PC-3 (cell line): ENCODE measurements at regions of chr11 and their contacts with region 1.

Region 1: DNA sequence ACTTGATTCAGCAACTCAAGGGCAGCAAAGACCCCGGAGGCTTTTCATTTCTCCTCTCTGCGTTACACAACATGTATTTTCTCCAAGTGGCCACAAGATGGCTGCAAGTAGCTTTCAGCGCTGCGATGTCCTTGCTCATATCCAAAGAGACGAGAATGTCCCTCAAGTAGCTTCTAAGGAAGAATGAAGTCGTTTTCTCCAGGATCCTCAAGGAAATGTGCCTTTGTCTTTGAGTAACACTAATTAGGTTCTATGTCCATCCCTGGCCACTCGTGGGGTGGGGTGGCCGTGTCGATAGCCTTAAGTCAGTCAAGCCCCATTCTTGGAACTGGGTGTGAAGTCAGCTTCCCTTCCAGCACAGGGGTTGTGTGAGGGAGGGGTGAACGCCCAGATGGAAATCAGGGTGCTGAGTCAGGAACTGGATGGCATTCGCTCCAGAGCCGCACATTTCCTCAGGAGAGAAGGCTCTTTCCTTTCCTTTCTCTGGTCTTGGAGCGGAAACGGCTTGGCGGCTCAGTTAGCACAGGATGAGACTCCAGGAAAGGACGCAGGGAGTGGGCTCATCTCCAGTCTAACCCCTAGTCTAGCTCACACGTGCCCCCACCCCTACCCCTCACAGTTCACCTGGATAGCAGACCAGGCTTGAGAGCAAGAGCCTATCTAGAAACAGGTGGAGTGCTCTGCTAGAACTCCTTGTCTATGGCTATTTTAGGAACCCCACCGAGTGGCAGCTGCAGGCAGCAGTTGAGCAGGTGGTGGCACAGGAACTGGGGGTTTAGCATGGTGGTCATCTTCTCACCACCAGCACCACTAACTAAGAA is 44.3 kb downstream of the NNMT start:
- DNase-seq: peak; percentile 85
- ATAC-seq: peak; percentile 92
- H3K4me3 ChIP-seq: peak overlapping the region; percentile 54; the same call in 1 of the 2 replicates
- H3K27ac ChIP-seq: no peak overlapping the region
- H3K4me1 ChIP-seq: peaks cover 6% of the 10 kb centered on the region; the same call in 1 of the 2 replicates
- H3K27me3 ChIP-seq: no peaks in the 10 kb centered on the region
- CTCF ChIP-seq: peak; percentile 94

Region 2: GRCh38 chr11:114243461-114244372 is 96.8 kb before region 1 on chr11:
- CTCF ChIA-PET with region 1: no interaction called
- POLR2A ChIA-PET with region 1: no interaction called
- intact Hi-C with region 1: no loop called
- DNase-seq: no peak
- ATAC-seq: no peak
- H3K4me3 ChIP-seq: no peak overlapping the region
- H3K27ac ChIP-seq: no peak overlapping the region
- H3K4me1 ChIP-seq: no peaks in the 10 kb centered on the region
- H3K27me3 ChIP-seq: peaks cover 93% of the 10 kb centered on the region
- CTCF ChIP-seq: no peak

Region 3: DNA sequence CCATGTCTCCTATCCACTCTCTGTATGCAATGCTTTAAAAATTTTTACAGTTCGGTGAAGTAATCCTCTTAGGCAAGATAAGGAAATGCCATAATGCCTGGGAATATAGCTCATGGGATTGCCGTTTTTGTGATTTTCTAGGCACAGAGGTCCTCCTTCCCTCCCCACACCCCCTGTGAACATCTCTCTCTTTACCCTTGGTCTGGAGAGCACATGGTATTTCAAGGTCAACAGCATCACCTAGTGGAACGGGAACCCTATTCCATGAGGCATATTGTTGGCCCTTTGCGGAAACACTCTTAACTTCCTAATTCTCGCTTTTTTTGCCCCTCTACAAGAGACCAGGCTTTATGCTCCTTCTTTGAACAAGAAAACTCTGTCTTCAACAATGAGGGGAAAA is 246.3 kb after region 1 on chr11:
- CTCF ChIA-PET with region 1: no interaction called
- POLR2A ChIA-PET with region 1: no interaction called
- intact Hi-C with region 1: loop called (anchors 5 kb)
- DNase-seq: peak; percentile 33
- ATAC-seq: peak; percentile 43; the same call in 1 of the 2 replicates
- H3K4me3 ChIP-seq: no peak overlapping the region
- H3K27ac ChIP-seq: no peak overlapping the region
- H3K4me1 ChIP-seq: no peaks in the 10 kb centered on the region
- H3K27me3 ChIP-seq: no peaks in the 10 kb centered on the region
- CTCF ChIP-seq: peak; percentile 56

Region 4: GRCh38 chr11:114606003-114606801 is 265.7 kb after region 1 on chr11:
- CTCF ChIA-PET with region 1: no interaction called
- POLR2A ChIA-PET with region 1: no interaction called
- intact Hi-C with region 1: loop called (anchors 1 kb)
- DNase-seq: peak; percentile 36
- ATAC-seq: peak; percentile 50
- H3K4me3 ChIP-seq: no peak overlapping the region
- H3K27ac ChIP-seq: no peak overlapping the region
- H3K4me1 ChIP-seq: no peaks in the 10 kb centered on the region
- H3K27me3 ChIP-seq: no peaks in the 10 kb centered on the region
- CTCF ChIP-seq: peak; percentile 47

Region 5: DNA sequence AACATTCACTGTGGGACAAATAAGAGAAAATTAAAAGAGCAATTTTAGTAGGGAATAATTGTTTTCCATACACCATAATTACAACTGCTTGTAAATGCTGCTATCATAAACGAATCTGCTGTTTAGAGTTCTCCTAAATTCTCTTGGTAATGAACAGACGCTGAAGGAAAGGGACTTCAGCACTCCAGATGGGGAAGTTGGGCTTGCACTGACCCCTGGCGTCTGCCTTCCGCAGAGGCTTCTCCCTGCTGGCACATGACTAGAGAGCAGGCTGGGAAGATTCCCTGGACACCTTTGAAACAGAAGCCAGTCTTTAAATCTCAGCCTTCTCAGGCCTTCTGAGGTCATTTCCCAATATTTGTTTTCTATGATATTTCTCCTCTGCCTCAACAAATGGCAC is 421.9 kb after region 1 on chr11:
- CTCF ChIA-PET with region 1: no interaction called
- POLR2A ChIA-PET with region 1: no interaction called
- intact Hi-C with region 1: loop called (anchors 1 kb)
- DNase-seq: peak; percentile 75
- ATAC-seq: peak; percentile 81
- H3K4me3 ChIP-seq: no peak overlapping the region
- H3K27ac ChIP-seq: no peak overlapping the region
- H3K4me1 ChIP-seq: no peaks in the 10 kb centered on the region
- H3K27me3 ChIP-seq: no peaks in the 10 kb centered on the region
- CTCF ChIP-seq: peak; percentile 83